GM18951 (cell line): ENCODE measurements at regions of chrX and their contacts with region 1.

Region 1: DNA sequence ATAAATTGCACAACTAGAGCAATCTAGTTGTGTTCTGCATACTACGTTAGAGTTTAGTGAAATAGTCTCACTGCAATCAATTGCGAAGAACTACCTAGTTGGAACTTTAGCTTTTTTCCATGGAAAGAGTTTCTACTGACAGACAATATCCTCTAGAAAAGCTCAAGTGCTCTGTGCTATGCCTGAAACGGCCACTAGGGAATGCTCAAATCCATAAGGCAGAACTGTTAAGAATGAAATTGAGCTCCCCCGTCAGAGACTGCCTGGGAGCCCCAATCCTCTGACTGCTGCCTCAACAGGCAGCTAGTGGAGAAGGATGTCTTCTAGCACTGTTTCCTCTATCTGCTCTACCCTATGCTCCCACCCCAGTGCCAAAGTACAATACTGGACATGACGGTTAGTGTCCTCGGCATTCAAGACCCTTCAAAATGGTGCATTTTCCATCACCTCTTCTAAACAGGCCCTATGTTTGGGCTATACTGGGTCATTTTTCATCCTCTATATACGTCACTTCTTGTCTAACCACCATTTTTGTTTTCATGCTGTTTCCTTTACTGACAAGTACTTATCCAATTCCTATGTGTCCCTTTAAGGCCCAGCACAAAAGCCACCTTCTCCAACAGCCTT is 35.3 kb downstream of the FRMD7 start:
- POLR2A ChIP-seq: no peak

Region 2: DNA sequence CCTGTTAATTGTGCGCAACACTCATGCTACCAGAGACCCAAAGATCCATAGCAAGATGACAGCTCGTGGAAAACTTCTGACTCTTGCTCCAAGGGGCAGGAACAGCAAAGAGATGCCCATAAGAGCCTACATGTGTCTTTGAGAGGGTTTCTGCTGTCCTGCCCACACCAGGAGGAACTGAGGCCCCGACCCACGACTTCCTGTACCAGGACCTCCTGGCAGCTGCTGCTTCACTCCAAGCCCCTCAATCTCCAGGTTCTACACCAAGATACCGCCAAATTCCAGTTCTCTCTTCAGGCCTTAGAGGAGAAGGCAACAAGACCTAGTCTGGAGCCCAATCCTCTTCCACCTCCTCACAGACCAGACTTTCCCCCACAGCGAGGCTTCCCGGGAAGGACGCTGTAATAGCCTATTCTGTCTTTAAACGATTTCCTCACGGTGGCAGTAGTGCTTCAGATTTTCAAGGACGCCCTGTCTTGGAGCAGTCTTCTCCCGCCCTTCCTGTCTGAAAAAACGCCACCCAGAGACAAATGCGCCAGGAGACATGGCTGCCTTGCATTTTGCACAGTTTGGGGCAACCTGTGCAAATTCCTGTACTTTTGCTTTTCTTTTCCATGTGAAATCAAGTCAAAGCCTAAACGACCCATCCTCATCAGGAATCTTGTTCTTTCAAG is 299.6 kb before region 1 on chrX:
- in situ Hi-C with region 1: no loop called
- POLR2A ChIP-seq: no peak

Region 3: GRCh38 chrX:132615391-132616131 is 523.0 kb after region 1 on chrX:
- in situ Hi-C with region 1: loop called (anchors 25 kb)
- POLR2A ChIP-seq: no peak